ENCODE measurements at regions of chr14 and their contacts with region 1.

Region 1: GRCh38 chr14:56491299-56492285 is 88.0 kb upstream of the TMEM260 start:
- DNase-seq: peak; percentile 71 to 83
- H3K4me3 ChIP-seq: no peak overlapping the region
- H3K27ac ChIP-seq: no peak overlapping the region
- H3K4me1 ChIP-seq: peaks cover 0 to 10% (median 1%) of the 10 kb centered on the region in 4 experiments; a peak in 1 of 7 replicates
- H3K27me3 ChIP-seq: no peaks in the 10 kb centered on the region
- CTCF ChIP-seq: peak; percentile 30 to 95 (median 65)
- EP300 ChIP-seq: no peak
- POLR2A ChIP-seq: no peak
- RAD21 ChIP-seq: peak; percentile 87 to 89

Region 2: DNA sequence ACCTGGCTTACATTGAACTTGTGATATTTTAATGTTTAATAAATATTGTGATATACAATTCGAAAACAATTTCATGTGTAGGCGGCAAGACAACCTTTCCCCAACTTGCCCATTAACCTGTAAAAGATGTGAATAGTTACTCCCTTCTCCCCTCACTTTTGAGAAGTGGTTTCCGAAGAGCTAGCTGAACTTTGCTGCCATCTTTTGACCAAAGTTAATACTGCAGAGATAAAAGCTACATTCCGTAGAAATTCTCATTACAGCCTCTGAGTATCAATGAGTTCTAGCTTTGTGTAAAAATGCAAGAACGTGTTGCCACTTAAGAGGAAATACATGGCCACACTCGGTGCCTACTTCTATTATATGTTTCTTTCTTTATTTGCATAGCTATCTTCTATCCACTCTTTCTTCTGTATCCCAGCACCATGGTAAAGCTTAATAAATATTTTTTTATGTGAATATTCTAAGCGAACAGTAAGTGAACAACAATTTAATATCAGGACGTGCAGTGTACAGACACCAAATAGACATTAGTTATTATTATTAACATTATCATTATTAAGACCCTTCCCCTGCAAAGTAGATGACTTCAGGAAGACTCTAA is 17.1 kb before region 1 on chr14:
- CTCF ChIA-PET with region 1: interaction called, 46 read pairs
- POLR2A ChIA-PET with region 1: no interaction called
- DNase-seq: no peak
- H3K4me3 ChIP-seq: no peak overlapping the region
- H3K27ac ChIP-seq: no peak overlapping the region
- H3K4me1 ChIP-seq: no peaks in the 10 kb centered on the region
- H3K27me3 ChIP-seq: no peaks in the 10 kb centered on the region; a peak in 1 of 7 replicates
- CTCF ChIP-seq: peak in 2 of 3 experiments; percentile 68 to 76; a peak in 2 of 4 replicates
- EP300 ChIP-seq: no peak
- POLR2A ChIP-seq: no peak
- RAD21 ChIP-seq: peak; percentile 96 to 97

Region 3: DNA sequence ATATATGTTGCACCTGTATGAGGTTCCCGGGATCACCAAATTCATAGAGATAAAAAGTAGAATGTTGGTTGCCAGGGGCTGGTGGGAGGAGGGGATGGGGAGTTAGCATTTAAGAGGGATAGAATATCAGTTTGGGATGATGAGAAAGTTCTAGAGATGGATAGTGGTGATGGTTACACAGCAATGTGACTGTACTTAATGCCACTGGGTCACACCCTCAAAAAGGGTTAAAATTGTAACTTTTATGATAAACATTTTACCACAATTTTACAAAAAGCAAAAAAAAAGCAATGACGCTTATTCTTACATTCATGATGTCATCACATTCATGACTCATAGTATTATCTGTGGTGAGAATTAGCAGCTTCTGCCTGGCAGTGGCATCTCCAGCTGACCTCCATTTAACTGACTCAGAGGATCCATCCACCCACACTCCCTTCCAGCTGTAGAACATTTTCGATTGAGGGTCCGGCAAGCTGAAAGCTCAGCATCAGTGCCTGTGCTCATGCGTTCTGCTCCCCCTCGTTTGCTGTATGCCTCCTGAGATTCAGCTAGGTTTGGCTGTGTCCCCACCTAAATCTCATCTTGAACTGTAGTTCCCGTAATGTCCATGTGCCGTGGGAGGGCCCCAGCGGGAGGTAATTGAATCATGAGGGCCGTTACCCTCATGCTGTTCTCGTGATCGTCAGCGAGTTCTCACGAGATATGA is 23.2 kb after region 1 on chr14:
- CTCF ChIA-PET with region 1: interaction called, 18 read pairs
- POLR2A ChIA-PET with region 1: no interaction called
- DNase-seq: no peak
- H3K4me3 ChIP-seq: no peak overlapping the region
- H3K27ac ChIP-seq: no peak overlapping the region
- H3K4me1 ChIP-seq: no peaks in the 10 kb centered on the region
- H3K27me3 ChIP-seq: no peaks in the 10 kb centered on the region
- CTCF ChIP-seq: no peak
- EP300 ChIP-seq: no peak
- POLR2A ChIP-seq: no peak
- RAD21 ChIP-seq: no peak

Region 4: GRCh38 chr14:56543436-56543835 is 51.8 kb after region 1 on chr14:
- CTCF ChIA-PET with region 1: interaction called, 105 read pairs
- POLR2A ChIA-PET with region 1: no interaction called
- DNase-seq: no peak
- H3K4me3 ChIP-seq: no peak overlapping the region
- H3K27ac ChIP-seq: no peak overlapping the region
- H3K4me1 ChIP-seq: no peaks in the 10 kb centered on the region
- H3K27me3 ChIP-seq: no peaks in the 10 kb centered on the region
- CTCF ChIP-seq: no peak
- EP300 ChIP-seq: no peak
- POLR2A ChIP-seq: no peak
- RAD21 ChIP-seq: no peak

Region 5: GRCh38 chr14:56590535-56590960 is 99.0 kb after region 1 on chr14:
- CTCF ChIA-PET with region 1: interaction called, 11 read pairs
- POLR2A ChIA-PET with region 1: no interaction called
- DNase-seq: no peak
- H3K4me3 ChIP-seq: no peak overlapping the region
- H3K27ac ChIP-seq: no peak overlapping the region
- H3K4me1 ChIP-seq: peaks cover 0 to 5% (median 0%) of the 10 kb centered on the region in 4 experiments; a peak in 1 of 7 replicates
- H3K27me3 ChIP-seq: no peaks in the 10 kb centered on the region
- CTCF ChIP-seq: peak in 1 of 3 experiments; percentile 27; a peak in 2 of 4 replicates
- EP300 ChIP-seq: no peak
- POLR2A ChIP-seq: no peak
- RAD21 ChIP-seq: peak in 1 of 2 experiments; percentile 34; a peak in 2 of 4 replicates

Region 6: DNA sequence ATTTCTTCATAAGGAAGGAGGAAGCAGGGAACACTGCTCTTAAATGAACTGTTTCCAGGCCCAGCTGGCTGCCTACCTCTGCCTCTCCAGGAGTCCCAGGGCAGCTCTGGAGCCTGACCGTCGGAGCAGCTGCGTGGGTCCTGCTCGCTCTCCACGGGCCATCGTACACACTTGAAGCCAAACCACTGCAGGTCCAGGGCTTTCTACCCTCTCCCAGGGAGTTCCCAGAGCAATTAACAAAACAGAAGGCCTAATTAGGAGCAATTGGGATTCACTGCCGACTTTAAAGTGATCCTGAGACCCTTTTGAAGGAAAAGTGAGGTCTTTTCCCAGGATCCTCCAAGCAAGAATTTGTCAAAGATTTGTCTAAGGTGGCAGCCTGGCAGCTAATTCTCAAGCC is 241.8 kb after region 1 on chr14:
- CTCF ChIA-PET with region 1: no interaction called
- POLR2A ChIA-PET with region 1: no interaction called
- DNase-seq: peak; percentile 56 to 63
- H3K4me3 ChIP-seq: peak overlapping the region in 2 of 4 experiments; percentile 5 to 7; a peak in 1 of 8 replicates
- H3K27ac ChIP-seq: no peak overlapping the region
- H3K4me1 ChIP-seq: peaks cover 5 to 24% (median 17%) of the 10 kb centered on the region in 4 experiments
- H3K27me3 ChIP-seq: peaks cover 0 to 12% (median 10%) of the 10 kb centered on the region in 4 experiments; a peak in 4 of 7 replicates
- CTCF ChIP-seq: no peak
- EP300 ChIP-seq: no peak
- POLR2A ChIP-seq: no peak
- RAD21 ChIP-seq: no peak

Region 7: DNA sequence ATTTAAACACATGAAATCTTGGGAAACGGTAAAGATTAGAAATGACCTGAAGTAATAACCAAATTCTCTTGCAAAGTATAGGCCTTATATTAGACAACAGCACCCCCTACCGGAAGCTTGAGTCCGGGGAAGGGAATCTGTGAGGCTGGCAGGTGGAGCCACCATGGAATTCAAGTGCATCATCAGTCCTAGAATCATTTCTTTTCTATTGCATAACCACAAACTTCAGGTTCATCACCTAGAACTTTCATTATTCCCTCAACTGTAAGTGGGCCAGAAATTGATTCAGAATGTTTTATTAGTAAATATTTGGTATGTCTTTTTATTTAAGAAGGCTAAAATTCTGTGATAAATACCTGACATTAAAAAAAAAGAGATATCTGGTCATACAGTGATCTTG is 825.7 kb after region 1 on chr14:
- CTCF ChIA-PET with region 1: interaction called, 17 read pairs
- POLR2A ChIA-PET with region 1: no interaction called
- DNase-seq: peak; percentile 36 to 82
- H3K4me3 ChIP-seq: no peak overlapping the region
- H3K27ac ChIP-seq: no peak overlapping the region
- H3K4me1 ChIP-seq: no peaks in the 10 kb centered on the region
- H3K27me3 ChIP-seq: no peaks in the 10 kb centered on the region
- CTCF ChIP-seq: peak; percentile 51 to 79 (median 75)
- EP300 ChIP-seq: no peak
- POLR2A ChIP-seq: no peak
- RAD21 ChIP-seq: peak; percentile 87 to 90